ENCODE measurements at regions of chr5 and their contacts with region 1.

Region 1: GRCh38 chr5:16934123-16934522 is 2.0 kb downstream of the MYO10 start:
- H3K4me3 Mint-ChIP-seq: no peak overlapping the region
- H3K27ac Mint-ChIP-seq: no peak overlapping the region
- H3K4me1 Mint-ChIP-seq: peaks cover 30% of the 10 kb centered on the region
- H3K27me3 Mint-ChIP-seq: peaks cover 77% of the 10 kb centered on the region

Region 2: DNA sequence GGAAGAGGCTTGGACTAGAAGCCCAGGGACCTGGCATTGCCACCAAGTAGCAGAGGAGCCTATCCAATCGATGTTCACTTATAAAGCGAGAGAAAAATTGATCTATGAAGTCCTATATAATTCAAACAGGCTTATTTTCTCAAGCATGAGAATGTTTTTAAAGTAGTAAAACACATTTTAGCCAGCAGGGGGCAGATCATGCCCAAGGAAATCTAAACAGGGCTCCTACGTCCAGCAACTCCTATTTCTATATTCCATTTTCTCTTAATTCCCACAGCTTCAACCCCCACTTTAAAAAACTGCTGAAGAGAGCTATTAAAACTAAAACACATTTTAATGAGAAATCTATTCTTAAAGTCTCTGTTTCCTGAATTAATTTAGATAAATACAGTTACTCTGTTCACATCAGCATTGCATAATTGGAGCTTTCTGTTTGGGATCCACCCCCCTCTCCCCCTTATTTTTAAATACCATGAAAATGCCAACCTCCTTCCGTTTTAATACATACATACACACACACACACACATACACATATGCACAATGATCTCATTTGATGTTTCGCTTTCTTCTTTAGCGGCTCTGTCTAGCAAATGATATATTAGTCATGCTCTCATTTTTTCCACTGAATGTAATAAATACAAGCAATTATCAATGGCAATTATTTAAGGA is 143.0 kb before region 1 on chr5:
- intact Hi-C with region 1: loop called (anchors 2 kb)
- H3K4me3 Mint-ChIP-seq: no peak overlapping the region
- H3K27ac Mint-ChIP-seq: no peak overlapping the region
- H3K4me1 Mint-ChIP-seq: peaks cover 10% of the 10 kb centered on the region
- H3K27me3 Mint-ChIP-seq: no peaks in the 10 kb centered on the region

Region 3: DNA sequence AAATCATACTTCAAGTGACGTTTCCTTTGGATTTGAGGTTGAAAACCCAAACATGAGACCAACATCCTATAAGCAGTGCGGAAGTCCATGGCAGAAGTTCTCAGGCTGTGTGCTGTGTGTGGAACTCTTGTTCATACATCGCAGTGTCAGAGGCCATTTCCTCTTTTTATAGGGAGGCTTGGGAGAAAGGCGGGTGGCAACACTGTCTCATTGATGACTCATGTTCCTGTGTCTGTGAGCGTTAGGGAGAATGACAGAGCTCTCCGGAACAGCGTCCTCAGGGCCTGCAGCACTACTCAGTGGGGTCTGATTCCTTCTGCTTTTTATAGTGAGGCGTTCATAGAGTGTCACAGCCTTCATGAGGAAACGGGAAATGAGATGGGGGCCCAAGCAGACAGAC is 184.5 kb after region 1 on chr5:
- intact Hi-C with region 1: loop called (anchors 1 kb)
- H3K4me3 Mint-ChIP-seq: peak overlapping the region; percentile 32
- H3K27ac Mint-ChIP-seq: peak overlapping the region; percentile 92
- H3K4me1 Mint-ChIP-seq: peaks cover 46% of the 10 kb centered on the region
- H3K27me3 Mint-ChIP-seq: peaks cover 6% of the 10 kb centered on the region

Region 4: GRCh38 chr5:17132444-17133083 is 198.4 kb after region 1 on chr5:
- intact Hi-C with region 1: loop called (anchors 5 kb)
- H3K4me3 Mint-ChIP-seq: no peak overlapping the region
- H3K27ac Mint-ChIP-seq: no peak overlapping the region
- H3K4me1 Mint-ChIP-seq: peaks cover 9% of the 10 kb centered on the region
- H3K27me3 Mint-ChIP-seq: peaks cover 32% of the 10 kb centered on the region

Region 5: DNA sequence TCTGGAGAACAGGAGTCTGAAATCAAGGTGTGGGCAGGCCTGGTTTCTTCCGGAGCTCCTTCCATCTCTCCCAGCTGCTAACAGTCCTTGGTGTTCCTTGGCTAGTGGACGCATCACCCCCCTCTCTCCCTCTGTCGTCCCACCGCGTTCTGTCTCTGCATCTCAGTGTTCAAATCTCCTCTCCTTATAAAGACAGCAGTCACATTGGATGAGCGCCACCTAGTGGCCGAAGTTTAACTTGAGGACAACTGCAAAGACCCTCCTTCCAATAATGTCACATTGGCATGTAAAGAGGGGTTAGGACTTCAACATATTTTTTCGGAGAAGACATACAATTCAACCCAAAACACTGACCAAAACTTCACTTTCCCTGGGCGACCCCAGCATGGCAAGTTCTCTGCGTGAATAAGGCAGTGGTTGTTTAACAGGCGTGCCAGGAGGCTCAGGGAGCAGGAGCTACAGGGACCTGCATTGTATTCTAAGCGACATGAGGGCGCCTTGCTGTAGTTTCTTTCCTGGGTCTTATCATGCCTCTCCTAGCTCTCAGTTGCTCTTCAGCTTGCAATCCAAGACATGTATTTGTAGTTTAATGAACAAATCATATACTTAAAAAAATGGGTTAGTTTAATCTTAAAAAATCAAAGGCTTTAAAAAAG is 255.4 kb after region 1 on chr5:
- intact Hi-C with region 1: loop called (anchors 1 kb)
- H3K4me3 Mint-ChIP-seq: no peak overlapping the region
- H3K27ac Mint-ChIP-seq: no peak overlapping the region
- H3K4me1 Mint-ChIP-seq: no peaks in the 10 kb centered on the region
- H3K27me3 Mint-ChIP-seq: peaks cover 2% of the 10 kb centered on the region

Measured in dendritic cell treated with granulocyte-macrophage colony-stimulating factor and Interleukin-4, amounts not matched to agents 40 ng/mL and 50 ng/mL, for 4 days (primary cell).